ENCODE measurements at regions of chr10 and their contacts with region 1.

Region 1: DNA sequence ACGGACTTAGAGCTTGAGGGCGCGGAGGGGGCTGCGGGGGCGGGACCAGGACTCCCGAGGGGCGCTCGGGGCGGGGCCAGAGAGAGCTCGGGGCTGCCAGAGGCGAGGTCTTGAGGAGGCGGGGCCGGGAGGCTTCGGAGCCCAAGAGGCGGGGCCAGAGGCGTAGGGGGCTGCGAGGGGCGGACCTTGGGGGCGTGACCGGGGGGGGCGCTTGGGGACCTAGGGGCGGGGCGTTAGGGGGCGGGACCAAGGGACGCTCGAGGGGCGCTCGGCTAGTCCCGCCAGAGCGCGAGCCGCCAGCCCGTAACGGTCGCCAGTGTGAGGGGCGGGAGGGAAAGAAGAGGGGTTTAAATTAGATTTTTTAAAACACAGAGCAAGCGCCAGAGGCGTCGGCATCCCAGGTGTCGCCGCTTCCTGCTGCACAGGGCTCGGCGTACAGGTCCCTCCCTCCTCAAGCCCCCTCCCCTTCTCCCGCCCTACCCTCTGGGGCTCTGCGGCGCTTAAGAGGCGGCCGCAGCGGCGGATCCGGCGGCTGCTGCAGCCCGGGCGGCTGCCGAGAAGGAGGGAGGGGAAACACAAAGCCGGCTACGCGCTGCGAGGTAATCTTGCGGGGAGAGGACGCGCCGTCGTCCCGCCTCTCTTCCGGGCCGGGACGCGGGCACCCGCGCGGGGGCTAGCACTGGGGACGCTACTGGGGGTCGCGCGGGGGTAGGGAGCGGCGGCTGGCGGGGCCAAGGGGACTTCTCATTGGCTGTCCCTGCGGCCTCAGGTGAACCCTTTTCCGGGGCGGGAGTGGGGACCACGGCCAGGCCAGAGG is at the start of gene ADD3:
- DNase-seq: peak; percentile 94
- ATAC-seq: peak; percentile 85
- H3K4me3 Mint-ChIP-seq: no peak within 1 kb of the TSS
- H3K27ac Mint-ChIP-seq: no peak within 1 kb of the TSS
- H3K4me1 Mint-ChIP-seq: peaks cover 54% of the 10 kb centered on the region
- H3K27me3 Mint-ChIP-seq: no peaks in the 10 kb centered on the region
- CTCF ChIP-seq: no peak
- total RNA-seq, gene ADD3: 85.8 and 95.3 TPM in 2 replicates

Region 2: DNA sequence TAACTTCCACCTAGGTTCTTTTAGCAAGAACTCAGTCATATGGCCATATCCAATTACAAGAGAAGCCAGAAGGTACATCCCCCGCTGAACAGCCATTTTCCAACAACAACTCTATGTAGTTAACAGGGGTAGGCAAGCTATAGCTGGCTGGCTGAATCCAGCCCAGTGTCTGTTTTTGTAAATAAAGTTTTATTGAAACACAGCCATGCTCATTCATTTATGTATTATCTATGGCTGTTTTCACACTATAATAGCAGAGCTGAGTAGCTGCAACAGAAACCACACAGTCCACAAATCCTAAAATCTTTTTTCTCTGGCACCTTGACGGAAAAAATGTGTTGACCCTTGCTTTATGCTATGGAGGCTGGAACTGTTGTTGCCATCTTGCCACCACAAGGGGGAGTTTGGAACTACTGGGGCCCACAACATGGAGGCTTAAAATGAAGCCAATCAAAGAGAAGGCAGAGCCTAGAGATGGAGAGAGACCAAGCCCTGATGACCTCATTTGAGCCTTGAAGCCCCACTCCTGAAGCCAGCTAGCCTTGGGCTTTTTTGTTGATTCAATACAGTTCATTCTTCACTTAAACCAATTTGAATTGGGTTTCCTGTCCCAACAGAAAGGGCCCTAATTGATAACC is 51.3 kb before region 1 on chr10:
- CTCF ChIA-PET with region 1: interaction called, 5 read pairs
- POLR2A ChIA-PET with region 1: interaction called, 7 read pairs
- intact Hi-C with region 1: loop called (anchors 2 kb)
- DNase-seq: no peak
- ATAC-seq: peak; percentile 79
- H3K4me3 Mint-ChIP-seq: peak overlapping the region; percentile 22
- H3K27ac Mint-ChIP-seq: peak overlapping the region; percentile 13
- H3K4me1 Mint-ChIP-seq: peaks cover 15% of the 10 kb centered on the region
- H3K27me3 Mint-ChIP-seq: no peaks in the 10 kb centered on the region
- CTCF ChIP-seq: peak; percentile 50

Region 3: GRCh38 chr10:110059925-110060324 is 52.0 kb after region 1 on chr10:
- CTCF ChIA-PET with region 1: no interaction called
- POLR2A ChIA-PET with region 1: interaction called, 12 read pairs
- intact Hi-C with region 1: no loop called
- DNase-seq: no peak
- ATAC-seq: peak; percentile 58
- H3K4me3 Mint-ChIP-seq: no peak overlapping the region
- H3K27ac Mint-ChIP-seq: peak overlapping the region; percentile 90
- H3K4me1 Mint-ChIP-seq: peaks cover 76% of the 10 kb centered on the region
- H3K27me3 Mint-ChIP-seq: no peaks in the 10 kb centered on the region
- CTCF ChIP-seq: no peak

Region 4: GRCh38 chr10:110137142-110137545 is 129.2 kb after region 1 on chr10:
- CTCF ChIA-PET with region 1: no interaction called
- POLR2A ChIA-PET with region 1: interaction called, 11 read pairs
- intact Hi-C with region 1: loop called (anchors 1 kb)
- DNase-seq: no peak
- ATAC-seq: peak; percentile 66
- H3K4me3 Mint-ChIP-seq: no peak overlapping the region
- H3K27ac Mint-ChIP-seq: peak overlapping the region; percentile 68
- H3K4me1 Mint-ChIP-seq: peaks cover 35% of the 10 kb centered on the region
- H3K27me3 Mint-ChIP-seq: no peaks in the 10 kb centered on the region
- CTCF ChIP-seq: no peak

Region 5: GRCh38 chr10:110241407-110241806 is 233.5 kb after region 1 on chr10:
- CTCF ChIA-PET with region 1: no interaction called
- POLR2A ChIA-PET with region 1: no interaction called
- intact Hi-C with region 1: no loop called
- DNase-seq: no peak
- ATAC-seq: no peak
- H3K4me3 Mint-ChIP-seq: no peak overlapping the region
- H3K27ac Mint-ChIP-seq: no peak overlapping the region
- H3K4me1 Mint-ChIP-seq: peaks cover 14% of the 10 kb centered on the region
- H3K27me3 Mint-ChIP-seq: no peaks in the 10 kb centered on the region
- CTCF ChIP-seq: no peak

Region 6: GRCh38 chr10:110279407-110279986 is 271.6 kb after region 1 on chr10:
- CTCF ChIA-PET with region 1: no interaction called
- POLR2A ChIA-PET with region 1: no interaction called
- intact Hi-C with region 1: no loop called
- DNase-seq: no peak
- ATAC-seq: peak; percentile 68
- H3K4me3 Mint-ChIP-seq: peak overlapping the region; percentile 38
- H3K27ac Mint-ChIP-seq: no peak overlapping the region
- H3K4me1 Mint-ChIP-seq: peaks cover 24% of the 10 kb centered on the region
- H3K27me3 Mint-ChIP-seq: no peaks in the 10 kb centered on the region
- CTCF ChIP-seq: peak; percentile 92

Region 7: DNA sequence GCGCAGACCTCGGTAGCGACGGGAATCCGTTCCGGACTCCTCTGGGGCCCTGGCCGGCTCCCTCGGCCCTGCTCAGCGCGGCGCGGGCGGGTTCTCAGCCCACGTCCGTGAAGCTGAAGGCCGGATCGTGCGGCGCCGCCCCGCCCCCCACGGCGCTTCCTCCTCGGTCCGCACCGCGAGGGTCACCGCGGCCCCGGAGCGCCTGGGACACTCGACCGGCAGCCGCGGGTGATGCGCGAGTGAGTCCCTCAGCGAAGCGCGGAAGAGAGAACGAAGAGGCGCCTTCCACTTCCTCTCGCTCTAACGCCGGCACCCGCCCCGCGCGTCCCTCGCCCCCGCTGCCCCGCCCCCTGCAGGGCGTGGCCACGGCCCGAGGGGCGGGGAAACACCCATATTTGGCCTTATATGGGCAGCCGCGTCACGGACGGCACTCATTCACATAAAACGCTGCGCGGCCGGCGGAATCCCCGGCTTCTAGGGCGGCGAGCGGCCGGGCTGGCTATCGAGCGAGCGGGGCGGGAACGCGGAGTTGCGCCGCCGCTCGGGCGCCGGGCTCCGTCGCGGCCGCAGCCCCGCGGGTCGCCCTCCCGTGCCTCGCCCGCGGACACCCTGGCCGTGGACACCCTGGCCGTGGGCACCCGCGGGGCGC is 489.7 kb after region 1 on chr10 and contains the start of gene DUSP5:
- CTCF ChIA-PET with region 1: no interaction called
- POLR2A ChIA-PET with region 1: no interaction called
- intact Hi-C with region 1: loop called (anchors 1 kb)
- DNase-seq: peak; percentile 99
- ATAC-seq: peak; percentile 87
- H3K4me3 Mint-ChIP-seq: peak within 1 kb of the TSS; percentile 90
- H3K27ac Mint-ChIP-seq: peak within 1 kb of the TSS; percentile 77
- H3K4me1 Mint-ChIP-seq: peaks cover 66% of the 10 kb centered on the region
- H3K27me3 Mint-ChIP-seq: peaks cover 3% of the 10 kb centered on the region
- CTCF ChIP-seq: no peak
- total RNA-seq, gene DUSP5: 26.1 and 28.6 TPM in 2 replicates

Measured in activated B cell treated with CpG ODN at 0.5 μM for 24 hours (primary cell).